ENCODE measurements at regions of chr2 and their contacts with region 1.

Region 1: DNA sequence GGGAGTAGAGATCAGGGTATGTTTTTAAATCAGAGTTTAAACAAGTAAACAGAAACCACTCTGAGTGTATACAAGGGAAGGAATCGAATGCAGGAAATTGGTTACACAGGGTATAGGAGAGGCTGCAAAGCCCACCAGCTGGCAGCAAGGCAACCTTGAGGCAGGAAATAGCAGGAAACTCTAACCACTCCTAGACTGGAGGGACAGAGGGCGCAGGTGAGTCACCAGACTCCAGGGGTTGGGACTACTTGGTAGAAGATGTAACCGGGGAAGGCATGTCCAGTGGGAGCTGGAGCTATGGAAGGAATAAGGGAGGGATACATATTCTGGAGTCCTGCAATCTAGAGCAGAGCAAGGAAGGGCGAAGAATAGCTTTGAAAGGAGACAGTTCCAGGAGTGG is 152.3 kb downstream of the MEIS1 start:
- DNase-seq: no peak

Region 2: DNA sequence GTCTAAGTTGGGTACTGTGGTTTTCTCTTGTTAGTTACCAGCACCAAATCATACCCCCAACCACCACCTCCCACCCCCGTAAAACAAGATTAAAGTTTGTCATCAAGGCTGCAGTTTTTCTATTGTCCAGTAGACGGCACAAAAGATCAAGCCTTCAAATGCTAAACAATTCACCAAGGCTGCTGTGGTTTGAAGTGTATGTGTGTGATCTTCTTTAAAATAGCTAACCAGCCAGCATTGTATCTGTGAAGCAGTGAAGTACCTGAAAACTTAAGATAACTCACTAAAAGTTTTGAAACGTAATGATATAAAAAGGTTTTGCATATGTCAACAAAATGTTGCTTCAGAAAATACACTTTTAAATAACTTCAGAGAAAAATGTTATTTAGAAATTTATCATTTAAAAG is 158.1 kb before region 1 on chr2:
- intact Hi-C with region 1: no loop called
- DNase-seq: no peak

Region 3: DNA sequence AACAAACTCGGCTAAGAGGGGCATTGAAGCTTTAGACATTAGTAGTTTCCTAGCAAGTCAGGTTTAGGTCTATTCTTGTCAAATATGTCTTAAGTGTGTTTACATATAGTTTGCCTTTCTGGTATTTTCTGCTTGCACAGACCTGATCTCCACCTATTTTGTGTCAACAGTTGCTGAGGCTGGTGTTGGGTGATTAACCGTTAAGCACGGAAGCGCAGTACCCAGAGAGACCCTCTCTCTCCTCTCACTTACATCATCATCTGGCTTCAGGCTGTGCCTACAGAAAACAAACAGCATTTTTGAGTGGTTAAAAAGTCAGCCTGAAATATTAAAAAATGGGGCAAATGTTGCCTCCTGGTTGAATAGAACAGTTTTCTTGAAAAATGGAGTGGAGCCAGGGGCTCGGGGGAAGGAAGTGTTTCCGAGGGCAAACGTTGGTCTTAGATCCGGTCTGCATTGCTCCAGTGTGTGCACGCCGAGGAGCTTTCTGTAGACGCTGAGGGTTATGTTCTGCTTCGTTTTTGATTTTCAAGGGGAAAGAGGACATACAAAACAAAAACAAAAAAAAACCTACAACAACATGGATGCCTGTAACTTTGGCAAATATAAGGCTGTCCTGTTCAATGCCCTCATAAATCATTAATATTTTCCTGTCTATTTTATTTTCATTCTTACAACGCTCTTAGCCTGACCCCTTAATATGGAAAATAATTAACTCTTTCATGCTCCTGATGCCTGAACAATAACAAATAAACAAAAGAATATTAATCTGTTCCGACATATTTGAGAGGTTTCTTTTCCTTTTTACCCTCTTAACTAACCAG is 31.5 kb before region 1 on chr2:
- intact Hi-C with region 1: no loop called
- DNase-seq: peak; percentile 50

Region 4: GRCh38 chr2:67234439-67234838 is 647.2 kb after region 1 on chr2:
- intact Hi-C with region 1: loop called in 1 of 2 experiments (anchors 10 kb)
- DNase-seq: no peak

Region 5: GRCh38 chr2:67666386-67667053 is 1079.3 kb after region 1 on chr2:
- intact Hi-C with region 1: loop called in 1 of 2 experiments (anchors 10 kb)
- DNase-seq: no peak

Measured in posterior vena cava (tissue), 2 donors.